ENCODE measurements at regions of chr14 and their contacts with region 1.

Region 1: GRCh38 chr14:104752735-104753531 is at the start of gene SIVA1:
- DNase-seq: peak; percentile 98 to 100
- ATAC-seq: peak; percentile 88 to 95 (median 88)
- H3K4me3 ChIP-seq: peak within 1 kb of the TSS; percentile 87
- H3K4me3 Mint-ChIP-seq: peak within 1 kb of the TSS; percentile 97
- H3K27ac ChIP-seq: peak within 1 kb of the TSS; percentile 84
- H3K27ac Mint-ChIP-seq: peak within 1 kb of the TSS; percentile 90 to 97
- H3K4me1 ChIP-seq: peaks cover 37% of the 10 kb centered on the region
- H3K4me1 Mint-ChIP-seq: peaks cover 25 to 34% of the 10 kb centered on the region in 2 donors
- H3K27me3 ChIP-seq: no peaks in the 10 kb centered on the region
- H3K27me3 Mint-ChIP-seq: no peaks in the 10 kb centered on the region
- CTCF ChIP-seq: no peak
- total RNA-seq, gene SIVA1: 59.7 to 74.8 (median 59.8) TPM

Region 2: DNA sequence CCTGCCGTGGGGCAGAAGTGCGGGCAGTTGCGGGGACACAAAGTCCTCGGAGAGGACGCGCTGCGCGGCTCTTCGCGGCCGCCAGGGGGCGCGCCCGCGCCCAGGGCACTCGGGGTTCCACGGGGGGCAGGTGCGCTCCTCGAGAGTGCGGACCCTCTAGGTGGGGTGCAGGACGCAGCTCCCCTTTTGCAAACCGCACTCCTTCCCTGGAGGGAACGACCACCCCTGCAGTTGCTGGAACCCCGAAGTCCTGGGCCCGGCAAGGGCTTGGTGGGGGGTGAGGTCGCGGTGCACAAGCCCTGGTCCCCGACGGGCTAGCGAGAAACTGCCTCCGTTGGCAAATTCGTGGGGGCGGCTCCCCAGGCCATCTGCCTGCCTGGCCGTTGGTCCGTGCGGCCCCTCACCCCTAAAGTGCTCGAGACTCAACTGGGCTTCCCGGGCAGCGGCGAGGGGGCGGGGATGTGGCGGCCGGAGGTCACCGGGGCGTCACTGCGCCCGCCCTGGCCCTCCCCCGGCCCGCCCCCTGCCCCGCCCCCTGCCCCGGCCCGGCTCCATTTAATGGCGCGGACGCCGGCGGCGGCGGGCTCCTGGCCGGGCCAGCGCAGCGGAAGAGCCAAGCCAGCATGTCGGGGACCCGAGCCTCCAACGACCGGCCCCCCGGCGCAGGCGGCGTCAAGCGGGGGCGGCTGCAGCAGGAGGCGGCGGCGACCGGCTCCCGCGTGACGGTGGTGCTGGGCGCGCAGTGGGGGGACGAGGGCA is 29.1 kb before region 1 on chr14 and contains the start of gene ADSS1:
- intact Hi-C with region 1: loop called (anchors 1 kb)
- DNase-seq: peak; percentile 68 to 82
- ATAC-seq: peak; percentile 88 to 89 (median 88)
- H3K4me3 ChIP-seq: peak within 1 kb of the TSS; percentile 61
- H3K4me3 Mint-ChIP-seq: peak within 1 kb of the TSS; percentile 61
- H3K27ac ChIP-seq: no peak within 1 kb of the TSS
- H3K27ac Mint-ChIP-seq: no peak within 1 kb of the TSS
- H3K4me1 ChIP-seq: peaks cover 11% of the 10 kb centered on the region
- H3K4me1 Mint-ChIP-seq: peaks cover 0 to 11% of the 10 kb centered on the region in 2 donors
- H3K27me3 ChIP-seq: no peaks in the 10 kb centered on the region
- H3K27me3 Mint-ChIP-seq: peaks cover 0 to 5% of the 10 kb centered on the region in 2 donors
- CTCF ChIP-seq: peak; percentile 98
- total RNA-seq, gene ADSS1: 2.1 to 2.7 (median 2.5) TPM

Region 3: GRCh38 chr14:104795788-104796686 is 43.1 kb after region 1 on chr14:
- intact Hi-C with region 1: loop called (anchors 2 kb)
- DNase-seq: peak; percentile 55 to 80
- ATAC-seq: peak; percentile 62 to 72 (median 67)
- H3K4me3 ChIP-seq: peak overlapping the region; percentile 17
- H3K4me3 Mint-ChIP-seq: peak overlapping the region; percentile 79
- H3K27ac ChIP-seq: peak overlapping the region; percentile 45
- H3K27ac Mint-ChIP-seq: peak overlapping the region; percentile 73 to 85
- H3K4me1 ChIP-seq: peaks cover 44% of the 10 kb centered on the region
- H3K4me1 Mint-ChIP-seq: peaks cover 19 to 61% of the 10 kb centered on the region in 2 donors
- H3K27me3 ChIP-seq: no peaks in the 10 kb centered on the region
- H3K27me3 Mint-ChIP-seq: no peaks in the 10 kb centered on the region
- CTCF ChIP-seq: no peak